Activated CD4-positive, alpha-beta T cell treated with anti-CD3 and anti-CD28 coated beads, Interleukin-2, amount 10 ng/mL, durations not matched to agents 24 days and 14 days (primary cell): ENCODE measurements at regions of chr4 and their contacts with region 1.

Region 1: DNA sequence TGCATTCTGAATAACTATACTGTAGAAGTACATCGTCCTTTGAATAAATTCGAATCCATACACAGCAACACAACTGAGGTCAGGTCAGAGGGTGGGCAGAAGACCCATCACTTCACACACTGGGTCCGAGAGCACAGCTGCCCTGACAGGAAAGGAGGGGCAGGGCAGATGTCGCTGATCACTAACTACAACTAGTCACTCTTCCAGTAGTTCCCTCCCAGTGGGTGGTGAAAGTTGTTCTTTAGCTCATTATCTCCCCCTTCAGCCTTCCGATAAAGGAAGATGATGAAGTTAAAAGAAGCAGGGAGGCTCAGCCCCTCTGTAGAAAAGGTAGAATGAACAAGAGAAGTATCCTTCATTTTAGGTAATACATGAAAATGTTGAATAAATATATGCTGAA is 278.9 kb downstream of the INPP4B start:
- DNase-seq: peak; percentile 89
- H3K4me3 Mint-ChIP-seq: peak overlapping the region; percentile 85
- H3K27ac Mint-ChIP-seq: peak overlapping the region; percentile 93
- H3K4me1 Mint-ChIP-seq: peaks cover 43% of the 10 kb centered on the region
- H3K27me3 Mint-ChIP-seq: no peaks in the 10 kb centered on the region

Region 2: DNA sequence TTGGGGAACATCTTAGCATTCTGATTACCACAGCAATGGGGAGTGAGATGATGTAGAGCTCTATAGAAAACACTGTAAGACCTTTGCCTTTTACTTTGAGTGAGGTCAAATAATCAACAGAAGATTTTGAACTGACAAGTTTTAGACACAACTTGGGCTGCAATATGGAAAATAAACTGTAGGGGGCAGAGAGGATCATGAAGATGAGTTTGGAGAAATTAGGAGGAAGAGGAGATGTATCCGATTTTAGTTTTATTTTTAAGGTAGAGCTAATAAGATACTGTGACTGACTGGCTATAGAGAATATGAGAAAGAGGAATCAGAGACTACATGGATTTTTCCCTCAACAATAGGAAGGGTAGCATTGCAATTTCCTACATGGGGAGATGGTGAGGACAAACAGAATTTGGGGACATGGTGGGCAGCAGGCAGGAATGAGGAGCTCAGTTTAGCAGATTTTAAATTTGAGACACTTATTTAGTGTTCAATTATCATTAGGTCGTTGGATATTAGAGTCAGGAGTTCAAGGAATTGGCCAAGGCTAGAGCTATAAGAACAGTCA is 284.2 kb before region 1 on chr4:
- intact Hi-C with region 1: loop called (anchors 2 kb)
- DNase-seq: peak; percentile 84
- H3K4me3 Mint-ChIP-seq: no peak overlapping the region
- H3K27ac Mint-ChIP-seq: no peak overlapping the region
- H3K4me1 Mint-ChIP-seq: peaks cover 10% of the 10 kb centered on the region
- H3K27me3 Mint-ChIP-seq: no peaks in the 10 kb centered on the region

Region 3: DNA sequence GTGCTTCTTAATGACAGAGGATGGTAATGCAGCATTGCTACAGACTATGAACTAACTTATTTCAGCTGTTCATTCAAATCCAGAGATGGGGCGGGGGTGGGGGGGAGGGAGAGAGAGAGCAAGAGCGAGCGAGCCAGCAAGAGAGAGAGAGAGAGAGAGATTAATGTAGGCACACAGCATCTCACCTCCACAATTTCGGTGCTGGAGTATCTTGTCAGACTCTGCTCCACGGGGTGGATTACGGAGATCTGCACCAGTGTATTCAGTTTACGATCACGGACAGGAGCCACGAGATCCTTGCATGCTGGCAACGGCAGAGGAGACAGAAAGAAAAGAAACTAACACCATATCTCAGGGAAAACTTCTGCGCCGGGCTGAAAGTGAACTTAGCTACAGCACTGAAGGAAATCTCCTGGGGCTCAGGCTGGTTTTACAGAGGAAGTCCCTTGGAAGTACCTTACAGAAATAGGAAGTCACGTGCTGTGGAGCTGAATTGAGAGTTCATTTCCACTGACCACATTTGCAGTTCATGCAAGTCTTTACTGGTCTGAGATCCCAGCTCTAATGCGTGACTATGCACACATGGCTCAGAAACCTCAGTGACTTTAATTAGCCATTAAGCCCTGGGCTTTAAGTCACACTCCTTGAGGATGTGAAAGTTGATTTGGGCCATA is 162.0 kb before region 1 on chr4:
- intact Hi-C with region 1: loop called (anchors 1 kb)
- DNase-seq: peak; percentile 88
- H3K4me3 Mint-ChIP-seq: peak overlapping the region; percentile 95
- H3K27ac Mint-ChIP-seq: peak overlapping the region; percentile 100
- H3K4me1 Mint-ChIP-seq: peaks cover 57% of the 10 kb centered on the region
- H3K27me3 Mint-ChIP-seq: no peaks in the 10 kb centered on the region

Region 4: DNA sequence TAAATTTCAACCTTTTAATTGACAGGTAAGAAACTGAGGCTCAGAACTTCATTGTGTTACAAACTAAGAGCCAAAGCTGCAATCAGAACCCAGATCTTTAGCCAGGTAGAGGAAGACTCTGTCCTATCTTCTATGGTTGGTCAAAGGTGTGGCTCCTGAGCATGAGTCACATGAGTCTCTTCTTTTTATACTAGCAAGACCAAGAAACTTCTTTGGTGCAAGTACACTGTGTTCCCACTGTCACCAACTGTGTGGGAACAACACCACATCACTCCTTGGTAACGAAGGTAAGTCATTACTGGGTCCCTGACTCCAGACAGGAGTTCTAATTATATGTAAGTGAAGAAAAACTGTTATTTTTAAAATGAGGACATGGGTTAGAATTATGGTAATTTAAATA is 11.2 kb before region 1 on chr4:
- intact Hi-C with region 1: loop called (anchors 1 kb)
- DNase-seq: no peak
- H3K4me3 Mint-ChIP-seq: peak overlapping the region; percentile 64
- H3K27ac Mint-ChIP-seq: peak overlapping the region; percentile 83
- H3K4me1 Mint-ChIP-seq: peaks cover 63% of the 10 kb centered on the region
- H3K27me3 Mint-ChIP-seq: no peaks in the 10 kb centered on the region

Region 5: DNA sequence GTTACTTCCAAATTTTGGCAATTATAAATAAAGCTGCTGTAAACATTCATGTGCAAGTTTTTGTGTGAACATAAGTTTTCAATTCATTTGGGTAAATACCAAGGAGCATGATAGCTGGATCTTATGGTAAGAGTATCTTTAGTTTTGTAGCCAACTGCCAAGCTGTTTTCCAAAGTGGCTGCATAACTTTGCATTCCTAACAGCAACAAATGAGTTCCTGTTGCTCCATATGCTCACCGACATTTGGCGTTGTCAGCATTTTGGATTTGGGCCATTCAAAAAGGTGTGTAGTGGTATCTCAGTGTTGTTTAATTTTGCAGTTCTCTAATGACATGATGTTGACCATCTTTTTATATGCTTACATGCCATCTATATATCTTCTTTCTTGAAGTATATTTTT is 70.4 kb after region 1 on chr4:
- intact Hi-C with region 1: no loop called
- DNase-seq: no peak
- H3K4me3 Mint-ChIP-seq: no peak overlapping the region
- H3K27ac Mint-ChIP-seq: no peak overlapping the region
- H3K4me1 Mint-ChIP-seq: no peaks in the 10 kb centered on the region
- H3K27me3 Mint-ChIP-seq: no peaks in the 10 kb centered on the region

Region 6: GRCh38 chr4:142656178-142656577 is 89.0 kb after region 1 on chr4:
- intact Hi-C with region 1: no loop called
- DNase-seq: peak; percentile 77
- H3K4me3 Mint-ChIP-seq: no peak overlapping the region
- H3K27ac Mint-ChIP-seq: no peak overlapping the region
- H3K4me1 Mint-ChIP-seq: no peaks in the 10 kb centered on the region
- H3K27me3 Mint-ChIP-seq: no peaks in the 10 kb centered on the region

Region 7: DNA sequence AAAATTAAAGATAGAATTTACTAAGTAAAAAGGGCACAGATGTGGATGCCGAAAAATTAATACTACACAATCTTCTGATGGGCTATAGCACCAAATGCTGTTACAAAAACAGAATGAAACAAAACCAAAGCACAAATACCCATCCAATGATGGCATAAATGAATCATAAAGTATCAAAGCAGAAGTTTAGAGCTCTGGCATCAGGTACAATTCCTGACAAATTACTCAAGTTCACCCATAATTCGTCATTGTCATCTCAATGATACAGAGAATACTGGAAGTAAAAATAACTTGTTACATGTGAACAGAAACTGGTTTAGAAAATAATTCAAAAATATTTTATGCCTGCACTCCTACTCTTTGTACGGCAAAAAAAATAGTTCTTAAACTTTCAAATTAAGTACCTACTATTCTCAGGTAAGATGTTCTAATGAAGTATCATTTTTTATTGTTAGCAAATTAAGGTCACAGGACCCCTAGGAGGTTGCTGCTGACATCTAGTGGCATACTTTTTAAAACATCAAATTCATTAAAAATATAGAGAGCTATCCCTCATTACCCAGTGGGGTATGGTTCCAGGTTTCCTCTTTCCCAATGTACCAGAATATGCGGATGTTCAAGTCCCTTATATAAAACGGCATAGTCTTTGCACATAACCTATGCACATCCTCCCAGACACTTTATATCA is 152.8 kb after region 1 on chr4:
- intact Hi-C with region 1: loop called (anchors 1 kb)
- DNase-seq: peak; percentile 67
- H3K4me3 Mint-ChIP-seq: no peak overlapping the region
- H3K27ac Mint-ChIP-seq: no peak overlapping the region
- H3K4me1 Mint-ChIP-seq: peaks cover 11% of the 10 kb centered on the region
- H3K27me3 Mint-ChIP-seq: no peaks in the 10 kb centered on the region

Region 8: DNA sequence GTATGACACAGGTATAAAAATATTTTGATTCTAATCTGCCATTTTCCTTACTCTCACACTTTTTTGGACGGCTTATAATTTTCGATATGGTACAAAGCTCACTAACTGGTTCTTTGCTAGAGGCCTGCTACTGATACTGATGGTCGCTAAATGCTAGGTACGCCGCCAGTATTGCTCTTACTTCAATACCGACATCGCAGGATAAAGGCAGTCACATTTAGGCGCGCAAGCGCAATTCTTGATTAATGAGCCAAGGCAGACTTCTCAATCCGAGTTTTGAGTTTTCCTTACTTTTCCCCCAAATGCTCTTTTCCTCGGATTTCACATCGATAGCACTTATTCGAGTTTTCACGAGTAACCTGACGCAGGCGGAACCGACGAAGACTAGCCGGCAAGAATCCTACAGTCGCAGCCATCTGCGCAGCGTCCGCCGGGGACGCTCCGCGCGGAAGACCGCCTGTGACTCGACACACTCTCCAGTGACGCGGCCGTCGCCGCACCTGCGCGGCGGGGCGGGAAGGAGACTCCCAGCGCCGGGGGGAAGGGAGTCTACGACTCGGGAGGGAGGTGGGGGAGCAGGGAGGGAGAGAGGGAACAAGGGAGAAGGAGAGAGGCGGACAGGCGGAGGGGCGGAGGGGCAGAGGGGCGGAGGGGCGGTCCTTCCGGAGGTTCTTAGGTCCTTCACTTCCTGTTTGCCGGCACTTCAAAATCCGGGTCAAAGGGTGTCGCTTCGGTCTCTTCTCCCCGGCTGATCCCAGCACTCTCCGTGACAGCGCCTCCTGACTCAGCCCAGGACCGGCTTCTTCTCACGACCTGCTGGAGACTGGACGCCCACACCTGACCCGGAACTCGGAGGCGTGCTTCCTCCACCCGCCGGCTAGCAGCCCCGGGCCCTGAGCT is 617.3 kb after region 1 on chr4 and contains the start of gene USP38:
- intact Hi-C with region 1: loop called (anchors 5 kb)
- DNase-seq: peak; percentile 94
- H3K4me3 Mint-ChIP-seq: peak within 1 kb of the TSS; percentile 90
- H3K27ac Mint-ChIP-seq: peak within 1 kb of the TSS; percentile 95
- H3K4me1 Mint-ChIP-seq: peaks cover 39% of the 10 kb centered on the region
- H3K27me3 Mint-ChIP-seq: no peaks in the 10 kb centered on the region
- total RNA-seq, gene USP38: 28.5 and 28.7 TPM in 2 replicates